ENCODE measurements at regions of chr4 and their contacts with region 1.

Region 1: DNA sequence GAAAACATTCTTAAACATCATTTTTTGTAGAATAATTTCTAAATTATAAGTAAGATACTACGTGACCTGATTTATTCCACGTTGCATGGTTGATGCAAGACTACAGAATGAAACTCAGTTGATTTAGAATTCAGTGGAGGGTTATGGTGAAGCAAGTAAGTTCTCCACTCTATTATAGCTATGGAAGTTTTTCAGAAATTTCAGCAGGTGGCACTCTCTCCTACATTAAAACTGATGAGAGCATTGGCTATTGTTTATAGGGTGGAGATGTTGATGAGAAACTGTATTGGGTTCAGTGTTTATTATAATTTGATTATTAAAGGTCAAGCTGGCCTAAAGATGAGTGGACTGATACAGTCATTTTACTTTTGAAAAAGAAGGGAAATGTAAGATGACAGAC is 88.0 kb downstream of the FNIP2 start:
- DNase-seq: no peak
- H3K4me3 ChIP-seq: no peak overlapping the region
- H3K27me3 ChIP-seq: no peaks in the 10 kb centered on the region
- CTCF ChIP-seq: peak; percentile 55

Region 2: DNA sequence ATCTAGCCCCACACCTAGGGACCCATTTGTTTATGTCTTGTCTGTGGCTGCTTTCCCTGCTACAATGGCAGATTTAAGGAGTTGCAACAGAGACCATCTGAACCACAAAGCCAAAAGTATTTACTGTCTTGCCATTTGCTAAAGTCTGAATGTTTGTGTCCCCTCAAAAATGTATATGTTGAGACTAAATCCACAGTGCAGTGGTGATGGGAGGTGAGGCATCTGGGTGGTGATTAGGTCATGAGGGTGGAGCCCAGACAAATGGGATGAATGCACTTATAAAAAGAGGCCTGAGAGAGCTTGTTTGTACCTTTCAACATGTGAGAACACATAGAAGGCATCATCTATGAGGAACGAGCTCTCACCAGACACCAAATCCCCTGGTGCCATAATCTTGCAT is 509.3 kb before region 1 on chr4:
- CTCF ChIA-PET with region 1: no interaction called
- POLR2A ChIA-PET with region 1: no interaction called
- DNase-seq: no peak
- H3K4me3 ChIP-seq: no peak overlapping the region
- H3K27me3 ChIP-seq: no peaks in the 10 kb centered on the region
- CTCF ChIP-seq: no peak

Region 3: GRCh38 chr4:158542991-158543590 is 313.8 kb before region 1 on chr4:
- CTCF ChIA-PET with region 1: no interaction called
- POLR2A ChIA-PET with region 1: no interaction called
- DNase-seq: no peak
- H3K4me3 ChIP-seq: no peak overlapping the region
- H3K27me3 ChIP-seq: no peaks in the 10 kb centered on the region
- CTCF ChIP-seq: no peak

Region 4: GRCh38 chr4:158873795-158874401 is 17.0 kb after region 1 on chr4:
- CTCF ChIA-PET with region 1: interaction called, 15 read pairs
- POLR2A ChIA-PET with region 1: no interaction called
- DNase-seq: peak; percentile 56
- H3K4me3 ChIP-seq: no peak overlapping the region
- H3K27me3 ChIP-seq: no peaks in the 10 kb centered on the region
- CTCF ChIP-seq: no peak

Region 5: DNA sequence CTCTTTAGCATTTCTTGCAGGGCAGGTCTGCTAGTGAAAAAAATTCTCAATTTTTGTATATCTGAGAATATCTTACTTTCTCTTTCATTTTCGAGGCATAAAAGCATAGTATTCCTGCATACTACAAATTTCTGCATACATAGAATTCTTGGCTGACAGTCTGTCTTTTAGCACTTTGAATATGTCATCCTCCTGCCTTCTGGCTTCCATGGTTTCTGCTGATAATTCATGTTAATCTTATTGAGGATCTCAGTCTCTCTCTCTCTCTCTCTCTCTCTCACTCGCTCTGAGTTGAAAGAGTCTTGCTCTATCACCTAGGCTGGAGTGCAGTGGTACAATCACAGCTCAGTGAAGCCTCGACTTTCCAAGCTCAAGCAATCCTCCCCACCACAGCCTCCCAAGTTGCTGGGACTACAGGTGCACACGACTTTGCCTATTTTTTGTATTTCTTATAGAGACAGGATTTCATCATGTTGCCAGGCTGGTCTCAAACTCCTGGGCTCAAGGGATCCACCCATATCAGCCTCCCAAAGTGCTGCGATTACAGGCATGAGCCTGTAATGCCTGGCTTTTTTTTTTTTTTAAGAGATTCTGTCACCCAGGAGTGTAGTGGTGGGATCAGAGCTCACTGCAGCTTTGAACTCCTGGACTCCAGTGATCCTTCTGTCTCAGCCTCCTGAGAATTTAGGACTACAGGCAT is 73.2 kb after region 1 on chr4:
- CTCF ChIA-PET with region 1: no interaction called
- POLR2A ChIA-PET with region 1: no interaction called
- DNase-seq: no peak
- H3K4me3 ChIP-seq: no peak overlapping the region
- H3K27me3 ChIP-seq: no peaks in the 10 kb centered on the region
- CTCF ChIP-seq: no peak

Region 6: DNA sequence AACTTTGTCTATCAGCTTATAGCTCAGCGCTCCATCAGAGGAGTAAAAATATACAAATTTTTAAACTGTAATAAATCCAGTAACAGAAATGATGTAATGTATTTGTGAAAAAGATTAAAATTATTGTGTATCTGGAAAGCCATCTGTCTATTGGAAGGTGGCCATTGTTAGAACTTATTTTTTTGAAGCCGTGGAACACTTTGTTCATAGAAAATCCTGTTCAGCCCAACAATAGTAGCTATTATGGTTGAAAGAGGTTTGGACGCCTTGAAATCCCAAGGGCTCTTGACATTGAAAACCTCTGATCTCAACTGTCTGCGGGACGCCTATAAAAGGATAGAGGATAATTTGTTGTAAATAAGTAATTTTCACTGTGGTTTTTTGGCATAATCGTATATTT is 344.3 kb after region 1 on chr4:
- CTCF ChIA-PET with region 1: interaction called, 30 read pairs
- POLR2A ChIA-PET with region 1: interaction called, 4 read pairs
- DNase-seq: no peak
- H3K4me3 ChIP-seq: no peak overlapping the region
- H3K27me3 ChIP-seq: no peaks in the 10 kb centered on the region
- CTCF ChIP-seq: no peak

Region 7: DNA sequence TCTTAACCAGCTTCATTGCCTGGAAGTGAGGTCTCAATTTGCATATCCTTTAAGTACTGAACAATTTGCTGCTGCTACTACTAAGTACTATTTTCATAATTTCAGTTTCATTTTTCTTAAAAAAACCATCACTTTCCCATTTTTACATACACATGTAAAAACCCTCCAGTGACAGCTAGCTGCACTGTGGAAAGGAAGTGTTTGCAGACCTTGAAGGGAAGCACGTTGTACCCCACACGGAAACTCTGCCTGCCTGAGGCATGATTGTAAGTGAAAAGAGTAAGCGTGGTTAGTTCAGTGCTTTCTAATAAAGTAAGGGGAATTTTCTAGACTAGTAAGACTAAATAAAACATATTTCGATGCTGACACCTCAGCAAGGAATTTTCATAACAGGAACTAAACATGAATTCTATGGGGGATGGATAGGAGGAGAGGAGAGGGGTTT is 349.6 kb after region 1 on chr4:
- CTCF ChIA-PET with region 1: interaction called, 30 read pairs
- POLR2A ChIA-PET with region 1: interaction called, 4 read pairs
- DNase-seq: no peak
- H3K4me3 ChIP-seq: no peak overlapping the region
- H3K27me3 ChIP-seq: no peaks in the 10 kb centered on the region
- CTCF ChIP-seq: no peak